ENCODE measurements at regions of chr1 and their contacts with region 1.

Region 1: GRCh38 chr1:194809665-194810064 is 1623.3 kb upstream of the B3GALT2 start:
- DNase-seq: no peak
- ATAC-seq: no peak

Region 2: GRCh38 chr1:194833111-194833510 is 23.4 kb after region 1 on chr1:
- intact Hi-C with region 1: loop called (anchors 2 kb)
- DNase-seq: no peak
- ATAC-seq: no peak

Region 3: GRCh38 chr1:194940336-194941030 is 130.8 kb after region 1 on chr1:
- intact Hi-C with region 1: no loop called
- DNase-seq: no peak
- ATAC-seq: no peak